ENCODE measurements at regions of chr6 and their contacts with region 1.

Region 1: DNA sequence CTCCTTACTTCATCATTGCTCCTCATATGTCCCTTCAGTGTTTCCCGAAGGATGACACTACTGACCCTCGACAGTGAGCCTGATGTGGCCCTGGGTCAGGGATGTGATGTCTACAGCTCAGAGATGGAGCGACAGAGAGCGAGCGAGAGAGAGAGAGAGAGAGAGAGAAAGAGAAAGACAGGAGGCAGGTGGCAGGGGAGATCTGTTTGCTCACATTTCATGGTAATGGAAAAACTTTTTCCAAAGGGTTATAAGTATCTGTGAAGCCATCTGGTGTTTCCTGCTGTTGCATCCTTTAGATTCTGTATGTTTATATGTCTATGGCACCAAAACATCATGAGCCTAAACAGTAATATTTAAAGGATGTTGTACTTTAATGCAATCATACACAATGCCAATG is 77.2 kb downstream of the PPP1R3G start:
- DNase-seq: no peak

Region 2: GRCh38 chr6:5053038-5053437 is 109.3 kb before region 1 on chr6:
- intact Hi-C with region 1: no loop called
- DNase-seq: no peak

Region 3: DNA sequence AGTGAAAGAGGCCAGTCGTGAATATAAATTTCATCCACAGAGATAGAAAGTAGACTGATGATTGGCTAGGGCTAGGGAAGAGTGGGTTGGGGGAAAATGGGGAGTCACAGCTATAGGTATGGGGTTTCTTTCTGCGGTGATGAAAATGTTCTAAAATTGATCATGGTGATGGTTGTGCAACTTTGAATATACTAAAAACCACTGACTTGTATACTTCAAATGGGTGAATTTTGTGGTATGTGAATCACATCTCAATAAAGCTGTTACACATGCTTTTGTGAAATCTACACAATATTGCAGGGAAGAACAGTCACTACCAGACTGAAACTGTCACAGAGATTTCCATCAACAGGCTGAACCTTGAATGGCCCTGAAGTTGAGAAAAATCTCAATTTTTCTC is 36.9 kb after region 1 on chr6:
- intact Hi-C with region 1: loop called (anchors 5 kb)
- DNase-seq: no peak

Measured in posterior cingulate gyrus (tissue), 11 donors.